A549 (cell line): ENCODE measurements at regions of chr6 and their contacts with region 1.

Region 1: GRCh38 chr6:154156135-154156896 is 117.3 kb downstream of the OPRM1 start:
- DNase-seq: peak; percentile 15 to 37
- ATAC-seq: peak; percentile 95
- H3K4me3 ChIP-seq: no peak overlapping the region
- H3K27ac ChIP-seq: no peak overlapping the region
- H3K4me1 ChIP-seq: no peaks in the 10 kb centered on the region
- CTCF ChIP-seq: peak; percentile 40
- EP300 ChIP-seq: no peak
- POLR2A ChIP-seq: no peak
- RAD21 ChIP-seq: peak; percentile 49 to 73

Region 2: DNA sequence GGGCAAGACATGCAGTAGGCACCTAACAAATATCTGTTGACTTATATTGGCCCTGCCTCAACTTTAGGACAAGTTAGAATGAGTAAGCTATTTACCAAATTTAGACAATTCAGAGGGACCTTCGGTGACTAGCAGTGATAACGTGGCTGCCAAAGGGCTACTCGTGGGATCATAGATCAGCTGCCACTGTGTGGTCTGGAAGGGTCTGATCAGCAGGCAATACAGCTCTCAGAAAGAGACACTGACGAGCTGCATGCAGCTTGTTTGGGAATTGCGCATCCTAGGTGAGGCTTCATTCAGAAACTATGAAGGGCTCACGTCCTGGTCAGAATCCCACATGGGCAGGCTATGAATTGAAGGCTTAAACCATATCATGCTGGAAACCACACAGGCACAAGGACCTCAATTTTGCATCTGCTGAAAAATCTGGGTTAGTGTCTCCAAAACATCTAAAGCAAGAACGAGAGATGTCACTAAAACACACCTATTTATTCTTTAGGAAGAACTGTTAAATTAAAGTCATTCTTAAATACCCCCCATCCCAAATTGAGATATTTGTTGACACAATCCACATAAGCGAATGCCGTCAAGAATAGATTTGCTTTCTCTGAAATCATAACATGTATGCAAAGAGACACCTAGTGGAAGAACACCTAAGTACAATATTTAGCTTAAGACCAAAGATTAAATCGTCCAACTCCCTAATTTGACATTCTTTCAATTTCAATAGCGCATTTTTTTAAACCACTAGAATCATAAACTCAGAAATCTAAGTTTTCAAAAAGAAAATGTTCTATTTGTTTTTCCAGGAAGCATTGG is 120.7 kb after region 1 on chr6:
- CTCF ChIA-PET with region 1: interaction called, 36 read pairs
- POLR2A ChIA-PET with region 1: interaction called, 3 read pairs
- DNase-seq: peak; percentile 8 to 22
- ATAC-seq: peak; percentile 62 to 80; a peak in 4 of 6 replicates
- H3K4me3 ChIP-seq: peak overlapping the region; percentile 28
- H3K27ac ChIP-seq: no peak overlapping the region
- H3K4me1 ChIP-seq: no peaks in the 10 kb centered on the region
- CTCF ChIP-seq: peak; percentile 60
- EP300 ChIP-seq: no peak
- POLR2A ChIP-seq: no peak
- RAD21 ChIP-seq: peak; percentile 53 to 61

Region 3: GRCh38 chr6:154404791-154405400 is 248.6 kb after region 1 on chr6:
- CTCF ChIA-PET with region 1: interaction called, 17 read pairs
- POLR2A ChIA-PET with region 1: no interaction called
- DNase-seq: no peak
- ATAC-seq: no peak
- H3K4me3 ChIP-seq: no peak overlapping the region
- H3K27ac ChIP-seq: peak overlapping the region; percentile 13 to 77; a peak in 4 of 6 replicates
- H3K4me1 ChIP-seq: peaks cover 36% of the 10 kb centered on the region
- CTCF ChIP-seq: no peak
- EP300 ChIP-seq: no peak
- POLR2A ChIP-seq: no peak
- RAD21 ChIP-seq: no peak

Region 4: GRCh38 chr6:154410619-154411072 is 254.3 kb after region 1 on chr6:
- CTCF ChIA-PET with region 1: interaction called, 17 read pairs
- POLR2A ChIA-PET with region 1: no interaction called
- DNase-seq: peak; percentile 60 to 82
- ATAC-seq: peak; percentile 82 to 88
- H3K4me3 ChIP-seq: peak overlapping the region; percentile 26; the same call in 2 of the 3 replicates
- H3K27ac ChIP-seq: peak overlapping the region; percentile 78 to 94
- H3K4me1 ChIP-seq: peaks cover 64% of the 10 kb centered on the region
- CTCF ChIP-seq: no peak
- EP300 ChIP-seq: peak in 1 of 2 experiments; percentile 54; a peak in 3 of 5 replicates
- POLR2A ChIP-seq: no peak
- RAD21 ChIP-seq: peak in 1 of 2 experiments; percentile 25; a peak in 2 of 5 replicates